ENCODE measurements at regions of chr22 and their contacts with region 1.

Region 1: GRCh38 chr22:35023692-35024363 is 42.1 kb upstream of the ISX start:
- DNase-seq: peak; percentile 62 to 74 (median 72)
- ATAC-seq: peak; percentile 96
- H3K4me3 ChIP-seq: no peak overlapping the region
- H3K27ac ChIP-seq: no peak overlapping the region
- H3K4me1 ChIP-seq: peaks cover 0 to 6% of the 10 kb centered on the region in 2 experiments; a peak in 3 of 5 replicates
- H3K27me3 ChIP-seq: no peaks in the 10 kb centered on the region
- CTCF ChIP-seq: peak; percentile 74 to 81 (median 75)
- EP300 ChIP-seq: no peak
- POLR2A ChIP-seq: no peak
- RAD21 ChIP-seq: peak; percentile 68 to 79

Region 2: GRCh38 chr22:33274214-33275072 is 1749.4 kb before region 1 on chr22:
- CTCF ChIA-PET with region 1: no interaction called
- POLR2A ChIA-PET with region 1: no interaction called
- in situ Hi-C with region 1: loop called (anchors 25 kb)
- intact Hi-C with region 1: no loop called
- DNase-seq: peak; percentile 35 to 57 (median 39)
- ATAC-seq: peak; percentile 86
- H3K4me3 ChIP-seq: no peak overlapping the region
- H3K27ac ChIP-seq: no peak overlapping the region
- H3K4me1 ChIP-seq: no peaks in the 10 kb centered on the region
- H3K27me3 ChIP-seq: no peaks in the 10 kb centered on the region; a peak in 1 of 5 replicates
- CTCF ChIP-seq: peak; percentile 61 to 72 (median 62)
- EP300 ChIP-seq: no peak
- POLR2A ChIP-seq: no peak
- RAD21 ChIP-seq: peak in 1 of 2 experiments; percentile 38; a peak in 1 of 4 replicates

Region 3: GRCh38 chr22:33920927-33921524 is 1102.8 kb before region 1 on chr22:
- CTCF ChIA-PET with region 1: no interaction called
- POLR2A ChIA-PET with region 1: no interaction called
- in situ Hi-C with region 1: no loop called
- intact Hi-C with region 1: loop called (anchors 10 kb)
- DNase-seq: peak; percentile 85 to 92 (median 90)
- ATAC-seq: peak; percentile 100
- H3K4me3 ChIP-seq: peak overlapping the region; percentile 19; the same call in 1 of the 2 replicates
- H3K27ac ChIP-seq: no peak overlapping the region
- H3K4me1 ChIP-seq: peaks cover 0 to 17% of the 10 kb centered on the region in 2 experiments; a peak in 2 of 5 replicates
- H3K27me3 ChIP-seq: no peaks in the 10 kb centered on the region
- CTCF ChIP-seq: no peak
- EP300 ChIP-seq: no peak
- POLR2A ChIP-seq: no peak
- RAD21 ChIP-seq: no peak

Region 4: DNA sequence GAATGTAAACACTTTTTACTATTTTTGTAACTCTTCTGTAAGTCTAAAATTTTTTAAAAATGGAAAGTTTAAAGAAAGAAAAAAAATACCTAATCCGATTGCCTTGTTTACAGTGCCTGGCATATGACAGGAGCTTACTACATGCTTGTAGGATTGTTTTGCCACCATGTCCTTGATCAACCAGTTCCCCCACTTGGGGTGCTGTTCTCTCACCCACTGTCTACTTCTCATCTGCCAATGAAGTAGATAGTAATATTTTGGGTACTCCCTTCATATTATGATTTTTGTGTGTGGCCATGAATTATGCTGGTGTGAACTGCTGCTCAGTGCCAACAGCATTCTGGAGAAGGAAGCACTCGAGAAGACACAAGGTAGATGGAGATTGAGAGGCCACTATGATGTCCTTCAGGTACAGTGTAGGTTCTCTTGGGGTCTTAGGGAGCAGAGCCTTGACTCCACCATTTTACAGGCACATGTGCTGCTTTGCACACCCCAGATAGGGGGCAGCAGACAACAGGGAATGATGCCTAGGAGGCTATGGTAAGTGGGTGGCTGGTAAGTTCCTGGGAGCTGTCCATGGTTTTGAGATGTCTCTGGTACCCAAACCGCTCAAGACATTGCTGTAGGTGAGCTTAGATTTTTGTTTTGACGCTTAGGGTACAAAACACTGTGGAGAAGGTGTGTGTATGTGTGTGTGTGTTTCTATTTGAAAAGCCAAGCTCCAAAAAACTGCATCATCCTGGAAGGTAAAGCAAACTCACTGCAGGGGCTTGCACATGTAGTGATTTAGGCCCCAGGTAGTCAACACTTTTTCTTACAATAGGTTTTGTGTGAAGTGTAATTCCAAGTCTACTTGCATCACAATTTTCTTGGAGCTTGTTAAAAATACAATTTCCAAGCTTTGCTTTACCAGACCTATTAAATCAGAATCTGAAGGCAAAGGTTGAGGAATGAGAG is 609.1 kb before region 1 on chr22:
- CTCF ChIA-PET with region 1: no interaction called
- POLR2A ChIA-PET with region 1: no interaction called
- in situ Hi-C with region 1: no loop called
- intact Hi-C with region 1: loop called (anchors 5 kb)
- DNase-seq: peak; percentile 11 to 41 (median 14)
- ATAC-seq: no peak
- H3K4me3 ChIP-seq: no peak overlapping the region
- H3K27ac ChIP-seq: no peak overlapping the region
- H3K4me1 ChIP-seq: no peaks in the 10 kb centered on the region
- H3K27me3 ChIP-seq: no peaks in the 10 kb centered on the region
- CTCF ChIP-seq: peak; percentile 39 to 43 (median 40); a peak in 5 of 6 replicates
- EP300 ChIP-seq: no peak
- POLR2A ChIP-seq: no peak
- RAD21 ChIP-seq: peak; percentile 32 to 65; a peak in 3 of 4 replicates

Region 5: DNA sequence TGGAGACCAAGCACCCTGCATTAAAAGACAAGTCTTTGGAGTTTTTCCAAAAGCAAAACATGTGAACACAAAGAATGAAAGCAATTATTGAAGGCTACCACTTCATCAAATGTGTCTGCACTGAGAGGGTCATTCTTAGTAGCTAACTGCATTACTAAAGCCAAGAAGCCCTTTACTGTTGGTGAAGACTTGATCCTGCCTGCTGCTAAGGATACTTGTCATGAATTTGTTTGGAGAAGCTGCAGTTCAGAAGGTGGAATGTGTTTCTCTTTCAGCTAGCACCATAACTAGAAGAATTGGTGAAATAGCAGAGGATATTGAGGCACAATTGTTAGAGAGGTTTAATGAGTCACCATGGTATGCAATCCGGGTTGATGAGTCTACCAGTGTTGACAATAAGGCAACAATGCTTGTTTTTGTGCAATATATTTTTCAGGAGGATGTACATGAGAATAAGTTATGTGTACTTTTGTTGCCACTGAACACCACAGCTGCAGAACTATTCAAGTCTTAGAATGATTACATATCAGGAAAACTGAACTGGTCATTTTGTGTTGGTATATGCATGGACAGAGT is 415.2 kb before region 1 on chr22:
- CTCF ChIA-PET with region 1: no interaction called
- POLR2A ChIA-PET with region 1: no interaction called
- in situ Hi-C with region 1: no loop called
- intact Hi-C with region 1: no loop called
- DNase-seq: no peak
- ATAC-seq: no peak
- H3K4me3 ChIP-seq: no peak overlapping the region
- H3K27ac ChIP-seq: no peak overlapping the region
- H3K4me1 ChIP-seq: no peaks in the 10 kb centered on the region
- H3K27me3 ChIP-seq: no peaks in the 10 kb centered on the region
- CTCF ChIP-seq: no peak
- EP300 ChIP-seq: no peak
- POLR2A ChIP-seq: no peak
- RAD21 ChIP-seq: no peak

Measured in K562 (cell line).